Activated B cell treated with CpG ODN at 0.5 μM for 24 hours (primary cell): ENCODE measurements at regions of chr10 and their contacts with region 1.

Region 1: GRCh38 chr10:124092860-124093773 is at the start of gene CHST15:
- DNase-seq: peak; percentile 55
- ATAC-seq: peak; percentile 43
- H3K4me3 Mint-ChIP-seq: peak within 1 kb of the TSS; percentile 90
- H3K27ac Mint-ChIP-seq: peak within 1 kb of the TSS; percentile 71
- H3K4me1 Mint-ChIP-seq: peaks cover 51% of the 10 kb centered on the region
- H3K27me3 Mint-ChIP-seq: no peaks in the 10 kb centered on the region
- CTCF ChIP-seq: no peak
- total RNA-seq, gene CHST15: 12.1 and 13.8 TPM in 2 replicates

Region 2: DNA sequence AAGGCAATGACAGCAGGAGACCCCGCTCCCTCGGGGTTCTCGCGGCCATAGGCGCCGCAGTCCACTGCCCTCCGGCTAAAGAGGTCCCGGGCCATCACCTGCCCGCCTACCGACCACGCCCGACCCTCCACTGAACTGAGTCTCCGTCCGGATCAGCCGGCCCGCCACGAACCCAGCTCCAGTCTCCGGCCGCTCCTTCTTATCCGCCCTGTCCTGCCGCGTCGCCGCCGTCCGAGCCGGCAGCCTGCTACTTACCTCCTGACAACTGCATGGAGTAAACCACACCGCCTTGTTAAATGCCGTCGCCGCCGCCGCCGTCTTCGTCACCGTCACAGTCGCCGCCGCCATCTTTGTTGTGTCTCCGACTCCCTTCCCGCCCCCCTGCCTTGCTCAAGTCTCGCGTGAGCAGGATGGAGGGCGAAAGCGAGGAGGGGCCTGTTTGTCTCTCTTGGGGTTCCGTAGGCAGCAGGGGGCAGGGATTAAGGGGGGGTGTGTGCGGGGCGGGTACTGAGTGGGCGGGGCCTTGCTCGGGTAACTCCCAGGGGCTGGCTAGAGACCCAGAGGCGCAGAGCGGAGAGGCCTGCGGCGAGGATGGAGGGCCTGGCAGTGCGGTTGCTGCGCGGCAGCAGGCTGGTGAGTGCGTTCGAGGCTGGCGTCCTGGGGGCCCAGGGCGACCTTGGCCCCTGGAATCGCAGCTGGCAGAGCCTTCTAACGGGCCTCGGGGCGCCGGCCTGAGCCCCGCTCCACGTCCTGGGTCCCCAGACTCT is 1084.5 kb before region 1 on chr10 and contains the starts of genes ACADSB and IKZF5:
- CTCF ChIA-PET with region 1: no interaction called
- POLR2A ChIA-PET with region 1: no interaction called
- intact Hi-C with region 1: loop called (anchors 5 kb)
- DNase-seq: peak; percentile 83
- ATAC-seq: peak; percentile 94
- H3K4me3 Mint-ChIP-seq: peak within 1 kb of the TSS; percentile 96
- H3K27ac Mint-ChIP-seq: peak within 1 kb of the TSS; percentile 96
- H3K4me1 Mint-ChIP-seq: peaks cover 50% of the 10 kb centered on the region
- H3K27me3 Mint-ChIP-seq: no peaks in the 10 kb centered on the region
- CTCF ChIP-seq: no peak
- total RNA-seq, gene ACADSB: 22.7 and 22.8 TPM in 2 replicates
- total RNA-seq, gene IKZF5: 14.2 and 17.0 TPM in 2 replicates

Region 3: GRCh38 chr10:124035928-124036558 is 57.1 kb before region 1 on chr10:
- CTCF ChIA-PET with region 1: no interaction called
- POLR2A ChIA-PET with region 1: interaction called, 37 read pairs
- intact Hi-C with region 1: loop called (anchors 1 kb)
- DNase-seq: peak; percentile 75
- ATAC-seq: peak; percentile 93
- H3K4me3 Mint-ChIP-seq: peak overlapping the region; percentile 85
- H3K27ac Mint-ChIP-seq: peak overlapping the region; percentile 95
- H3K4me1 Mint-ChIP-seq: peaks cover 26% of the 10 kb centered on the region
- H3K27me3 Mint-ChIP-seq: no peaks in the 10 kb centered on the region
- CTCF ChIP-seq: no peak

Region 4: GRCh38 chr10:124074501-124075109 is 18.5 kb before region 1 on chr10:
- CTCF ChIA-PET with region 1: no interaction called
- POLR2A ChIA-PET with region 1: interaction called, 5 read pairs
- intact Hi-C with region 1: loop called (anchors 2 kb)
- DNase-seq: no peak
- ATAC-seq: peak; percentile 73
- H3K4me3 Mint-ChIP-seq: peak overlapping the region; percentile 52
- H3K27ac Mint-ChIP-seq: peak overlapping the region; percentile 69
- H3K4me1 Mint-ChIP-seq: peaks cover 81% of the 10 kb centered on the region
- H3K27me3 Mint-ChIP-seq: no peaks in the 10 kb centered on the region
- CTCF ChIP-seq: no peak

Region 5: DNA sequence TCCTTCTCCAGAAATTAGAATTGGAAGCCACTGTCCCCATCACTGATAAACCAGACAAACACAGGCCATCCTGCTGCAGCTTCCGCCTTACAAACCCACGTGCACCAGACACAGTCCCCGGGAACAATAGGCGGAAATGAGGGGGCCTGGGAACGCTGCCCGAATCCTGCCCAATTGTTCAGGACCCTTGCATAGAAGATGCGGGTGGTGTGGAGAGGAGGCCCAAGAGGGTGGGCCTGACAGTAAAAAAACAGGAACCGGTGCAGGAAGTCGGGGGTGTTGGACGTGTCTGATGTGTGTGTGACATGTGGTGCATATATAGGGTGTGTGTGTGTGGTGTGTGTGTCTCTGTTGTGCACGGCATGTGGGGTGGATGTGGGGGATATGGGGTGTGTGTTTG is 26.8 kb after region 1 on chr10:
- CTCF ChIA-PET with region 1: interaction called, 4 read pairs
- POLR2A ChIA-PET with region 1: interaction called, 15 read pairs
- intact Hi-C with region 1: loop called (anchors 1 kb)
- DNase-seq: no peak
- ATAC-seq: peak; percentile 45
- H3K4me3 Mint-ChIP-seq: no peak overlapping the region
- H3K27ac Mint-ChIP-seq: no peak overlapping the region
- H3K4me1 Mint-ChIP-seq: peaks cover 33% of the 10 kb centered on the region
- H3K27me3 Mint-ChIP-seq: no peaks in the 10 kb centered on the region
- CTCF ChIP-seq: no peak

Region 6: GRCh38 chr10:124152916-124153826 is 60.1 kb after region 1 on chr10:
- CTCF ChIA-PET with region 1: interaction called, 4 read pairs
- POLR2A ChIA-PET with region 1: interaction called, 3 read pairs
- intact Hi-C with region 1: loop called (anchors 2 kb)
- DNase-seq: peak; percentile 28
- ATAC-seq: peak; percentile 68
- H3K4me3 Mint-ChIP-seq: no peak overlapping the region
- H3K27ac Mint-ChIP-seq: no peak overlapping the region
- H3K4me1 Mint-ChIP-seq: peaks cover 16% of the 10 kb centered on the region
- H3K27me3 Mint-ChIP-seq: no peaks in the 10 kb centered on the region
- CTCF ChIP-seq: no peak

Region 7: DNA sequence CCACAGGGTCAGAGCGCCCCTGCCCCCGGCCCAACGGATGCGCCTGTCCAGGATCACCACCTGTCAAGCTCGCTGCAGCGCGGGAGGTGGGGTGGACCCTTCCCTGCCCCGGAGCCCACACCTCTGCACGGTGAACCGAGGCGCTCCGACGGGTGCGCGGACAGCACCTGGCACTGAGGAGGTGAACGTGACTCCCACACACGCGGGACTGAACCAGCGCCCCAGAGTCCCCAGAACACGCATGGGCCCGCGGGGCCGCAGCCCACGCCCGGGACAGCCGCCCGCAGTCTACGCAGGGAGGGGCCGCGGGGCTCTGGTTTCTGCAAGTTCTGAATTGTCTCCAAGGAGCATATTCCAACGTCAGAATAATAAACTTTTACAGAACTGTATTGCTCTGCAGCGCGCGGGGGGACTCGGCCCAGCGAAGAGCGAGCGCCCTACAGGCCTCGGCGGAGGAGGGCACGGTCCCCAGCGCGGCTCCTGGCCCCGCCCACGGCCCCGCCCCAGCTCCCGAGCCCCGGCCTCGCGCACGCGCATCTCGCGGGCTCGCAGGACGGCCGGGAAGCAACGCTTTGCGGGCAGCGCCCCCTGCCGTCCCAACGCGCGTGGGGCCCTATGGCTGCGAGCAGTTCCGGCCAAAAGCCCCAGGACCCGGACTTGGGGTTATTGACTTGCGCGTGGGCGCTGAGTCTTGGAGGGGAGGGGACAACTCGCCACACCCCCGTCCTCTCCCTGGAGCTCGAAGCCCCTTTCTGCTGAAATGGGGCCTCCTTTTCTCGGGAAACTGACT is 295.9 kb after region 1 on chr10:
- CTCF ChIA-PET with region 1: interaction called, 4 read pairs
- POLR2A ChIA-PET with region 1: no interaction called
- intact Hi-C with region 1: loop called (anchors 1 kb)
- DNase-seq: peak; percentile 97
- ATAC-seq: peak; percentile 99
- H3K4me3 Mint-ChIP-seq: peak overlapping the region; percentile 58
- H3K27ac Mint-ChIP-seq: no peak overlapping the region
- H3K4me1 Mint-ChIP-seq: peaks cover 3% of the 10 kb centered on the region
- H3K27me3 Mint-ChIP-seq: peaks cover 7% of the 10 kb centered on the region
- CTCF ChIP-seq: peak; percentile 86